ENCODE measurements at regions of chr11 and their contacts with region 1.

Region 1: GRCh38 chr11:35852056-35852455 is 91.8 kb upstream of the LDLRAD3 start:
- DNase-seq: peak; percentile 17 to 55 (median 41)
- ATAC-seq: peak in 3 of 4 donors; percentile 59 to 78 (median 72)
- H3K4me3 ChIP-seq: no peak overlapping the region
- H3K27ac ChIP-seq: no peak overlapping the region
- H3K4me1 ChIP-seq: peaks cover 0 to 16% (median 0%) of the 10 kb centered on the region in 12 donors
- H3K27me3 ChIP-seq: no peaks in the 10 kb centered on the region
- CTCF ChIP-seq: no peak
- POLR2A ChIP-seq: no peak

Region 2: GRCh38 chr11:35919244-35919643 is 67.2 kb after region 1 on chr11:
- intact Hi-C with region 1: loop called in 1 of 10 experiments (anchors 10 kb)
- DNase-seq: no peak
- ATAC-seq: no peak
- H3K4me3 ChIP-seq: no peak overlapping the region
- H3K27ac ChIP-seq: no peak overlapping the region
- H3K4me1 ChIP-seq: peaks cover 0 to 15% (median 0%) of the 10 kb centered on the region in 12 donors
- H3K27me3 ChIP-seq: peaks cover 0 to 7% (median 0%) of the 10 kb centered on the region in 9 donors
- CTCF ChIP-seq: no peak
- POLR2A ChIP-seq: no peak